ENCODE measurements at regions of chr14 and their contacts with region 1.

Region 1: GRCh38 chr14:70816525-70816924 is 7.2 kb upstream of the MAP3K9 start:
- DNase-seq: no peak
- ATAC-seq: no peak
- H3K4me3 ChIP-seq: no peak overlapping the region
- H3K4me3 Mint-ChIP-seq: no peak overlapping the region
- H3K27ac ChIP-seq: no peak overlapping the region
- H3K27ac Mint-ChIP-seq: no peak overlapping the region
- H3K4me1 ChIP-seq: peaks cover 5% of the 10 kb centered on the region
- H3K4me1 Mint-ChIP-seq: peaks cover 15% of the 10 kb centered on the region
- H3K27me3 ChIP-seq: peaks cover 5 to 7% of the 10 kb centered on the region in 2 experiments
- H3K27me3 Mint-ChIP-seq: peaks cover 28% of the 10 kb centered on the region
- CTCF ChIP-seq: no peak

Region 2: GRCh38 chr14:70714055-70714621 is 102.4 kb before region 1 on chr14:
- CTCF ChIA-PET with region 1: no interaction called
- POLR2A ChIA-PET with region 1: no interaction called
- intact Hi-C with region 1: loop called (anchors 2 to 5 kb)
- DNase-seq: peak in 12 of 14 experiments; percentile 12 to 84 (median 36)
- ATAC-seq: no peak
- H3K4me3 ChIP-seq: no peak overlapping the region
- H3K4me3 Mint-ChIP-seq: no peak overlapping the region
- H3K27ac ChIP-seq: no peak overlapping the region
- H3K27ac Mint-ChIP-seq: no peak overlapping the region
- H3K4me1 ChIP-seq: peaks cover 5% of the 10 kb centered on the region
- H3K4me1 Mint-ChIP-seq: peaks cover 5% of the 10 kb centered on the region
- H3K27me3 ChIP-seq: no peaks in the 10 kb centered on the region
- H3K27me3 Mint-ChIP-seq: no peaks in the 10 kb centered on the region
- CTCF ChIP-seq: peak; percentile 95

Measured in CD4-positive, alpha-beta T cell (primary cell).